Left colon (tissue), 2 donors: ENCODE measurements at regions of chr17 and their contacts with region 1.

Region 1: DNA sequence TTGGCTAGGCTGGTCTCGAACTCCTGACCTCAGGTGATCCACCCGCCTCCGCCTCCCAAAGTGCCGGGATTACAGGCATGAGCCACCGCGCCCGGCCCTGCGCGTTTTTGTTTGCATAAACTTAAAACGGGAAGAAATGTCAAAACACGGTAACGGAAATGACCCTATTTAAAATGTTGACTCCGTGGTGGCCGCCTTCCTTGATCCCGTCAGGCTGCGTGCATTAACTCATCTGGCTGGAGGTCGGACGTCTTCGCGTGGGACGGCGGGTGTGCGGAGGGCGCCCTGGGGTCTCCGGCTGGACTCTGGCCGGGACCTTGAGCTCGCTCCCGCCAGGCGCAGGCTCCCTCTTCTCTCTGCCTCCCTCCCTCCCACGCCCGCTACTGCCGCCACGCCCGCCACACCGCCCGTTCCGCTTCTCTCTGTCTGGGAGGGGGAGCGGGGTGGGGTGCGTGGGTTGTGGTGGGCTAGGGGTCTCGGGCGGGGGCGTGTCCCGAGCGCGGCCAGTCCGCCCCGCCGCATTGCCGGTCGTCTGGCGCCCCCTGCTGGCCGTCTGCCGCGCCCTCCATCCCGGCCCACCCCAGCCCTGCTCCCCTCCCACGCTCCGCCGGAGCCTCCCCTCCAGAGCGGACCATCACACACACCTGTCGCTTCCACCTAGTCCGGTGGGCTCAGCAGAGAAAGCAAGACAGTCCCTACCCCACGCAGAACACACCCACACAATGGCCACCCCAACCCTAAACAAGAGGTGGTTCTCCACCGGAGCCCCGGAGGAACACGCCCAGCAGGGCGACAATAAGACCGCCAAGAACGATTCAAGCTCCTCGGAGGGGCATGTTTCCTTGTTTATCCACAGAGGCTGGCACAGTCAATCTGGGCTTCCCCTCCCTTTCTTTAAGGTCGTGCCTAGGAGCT is 1.2 kb upstream of the CCDC42 start:
- DNase-seq: peak; percentile 42 to 78
- ATAC-seq: peak; percentile 87

Region 2: GRCh38 chr17:8409966-8410864 is 335.6 kb before region 1 on chr17:
- intact Hi-C with region 1: loop called (anchors 5 to 10 kb)
- DNase-seq: peak; percentile 85 to 89
- ATAC-seq: peak; percentile 80

Region 3: DNA sequence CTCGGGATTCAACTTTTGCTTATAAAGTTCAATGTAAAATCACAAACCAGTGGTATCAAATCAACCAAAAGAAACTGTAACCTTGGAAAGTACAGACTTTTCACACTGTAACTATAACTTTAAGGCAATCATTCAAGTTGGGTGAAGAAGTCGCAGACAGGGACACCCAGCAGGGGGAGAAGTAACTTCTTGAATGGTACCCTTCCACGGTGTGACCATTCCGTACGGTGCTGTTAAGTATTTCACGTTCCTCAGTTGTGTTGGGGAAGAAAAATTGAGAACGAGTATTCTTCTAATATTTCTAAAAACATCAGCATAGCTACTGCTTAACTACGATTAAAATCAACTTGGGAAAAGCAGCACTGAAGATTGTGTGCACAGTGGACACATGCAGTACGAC is 171.2 kb before region 1 on chr17:
- intact Hi-C with region 1: loop called in 1 of 2 experiments (anchors 5 kb)
- DNase-seq: no peak
- ATAC-seq: no peak

Region 4: DNA sequence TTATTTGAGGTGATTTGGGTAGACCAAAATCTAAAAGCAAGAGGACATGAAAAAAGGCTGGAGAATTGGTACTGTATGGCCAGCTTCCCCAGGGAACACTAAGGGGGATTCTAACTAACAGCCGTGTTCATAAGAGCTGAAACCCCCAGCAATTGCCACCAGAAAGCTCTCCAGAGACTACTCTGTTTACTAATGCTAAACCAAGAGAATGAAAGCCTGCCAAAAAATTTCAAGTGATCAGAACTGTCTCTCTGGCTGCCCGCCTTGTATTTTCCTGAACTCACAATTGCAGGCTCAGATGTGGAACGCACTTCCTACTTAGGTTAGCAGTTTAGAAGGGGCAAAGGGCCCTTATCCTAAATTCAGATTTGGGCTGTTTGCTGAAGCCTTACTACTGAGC is 139.4 kb before region 1 on chr17:
- intact Hi-C with region 1: no loop called
- DNase-seq: no peak
- ATAC-seq: no peak